ENCODE measurements at regions of chr10 and their contacts with region 1.

Region 1: DNA sequence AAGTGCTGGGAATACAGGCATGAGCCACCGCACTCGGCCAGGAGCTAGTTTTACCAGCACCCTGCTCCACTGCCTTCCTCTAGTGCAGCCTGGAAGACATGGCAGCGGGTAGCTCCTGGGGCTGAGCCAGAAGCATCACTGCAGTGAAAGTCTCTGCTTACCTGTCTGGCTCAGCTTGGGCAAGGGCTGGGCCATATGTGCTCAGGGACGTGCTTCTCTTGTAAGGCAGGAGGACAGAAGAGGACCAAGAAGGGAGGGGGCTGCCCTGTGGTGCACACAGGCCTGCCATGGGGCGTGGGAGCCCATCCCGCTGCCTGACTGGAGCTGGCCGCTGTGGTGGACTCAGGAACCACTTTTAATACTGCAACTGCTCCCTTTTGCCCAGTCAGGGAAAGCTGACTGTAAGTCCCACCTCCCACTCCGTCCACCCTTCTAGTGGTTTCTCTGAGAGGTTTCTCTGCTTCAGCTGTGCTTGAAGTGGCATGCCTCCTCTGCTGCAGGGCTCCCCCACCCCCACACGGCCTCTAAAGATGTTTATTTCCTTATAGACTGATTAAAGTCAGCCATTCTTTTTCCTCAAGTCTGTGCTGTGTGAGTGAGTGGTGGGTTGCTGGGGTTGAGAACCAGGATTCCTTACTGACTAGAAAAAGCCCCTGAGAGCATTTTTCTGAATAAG is 25.3 kb upstream of the C10orf95 start:
- DNase-seq: no peak
- H3K4me3 ChIP-seq: no peak overlapping the region
- H3K27ac ChIP-seq: no peak overlapping the region
- H3K4me1 ChIP-seq: no peaks in the 10 kb centered on the region
- H3K27me3 ChIP-seq: no peaks in the 10 kb centered on the region
- CTCF ChIP-seq: no peak
- POLR2A ChIP-seq: no peak

Region 2: GRCh38 chr10:102229810-102230263 is 246.8 kb before region 1 on chr10:
- intact Hi-C with region 1: no loop called
- DNase-seq: peak; percentile 79
- H3K4me3 ChIP-seq: peak overlapping the region in 1 of 2 donors; percentile 14
- H3K27ac ChIP-seq: no peak overlapping the region
- H3K4me1 ChIP-seq: peaks cover 0 to 18% of the 10 kb centered on the region in 2 donors
- H3K27me3 ChIP-seq: peaks cover 13 to 18% of the 10 kb centered on the region in 2 donors
- CTCF ChIP-seq: peak; percentile 90 to 98 (median 96)
- POLR2A ChIP-seq: no peak

Region 3: GRCh38 chr10:102394079-102394800 is 82.4 kb before region 1 on chr10:
- intact Hi-C with region 1: loop called (anchors 5 kb)
- DNase-seq: peak; percentile 92
- H3K4me3 ChIP-seq: peak overlapping the region; percentile 58 to 85
- H3K27ac ChIP-seq: peak overlapping the region; percentile 97 to 98
- H3K4me1 ChIP-seq: peaks cover 0 to 14% of the 10 kb centered on the region in 2 donors
- H3K27me3 ChIP-seq: no peaks in the 10 kb centered on the region
- CTCF ChIP-seq: peak in 3 of 4 experiments; percentile 95 to 99 (median 98)
- POLR2A ChIP-seq: peak; percentile 39 to 80

Region 4: GRCh38 chr10:102450194-102450938 is 26.2 kb before region 1 on chr10:
- intact Hi-C with region 1: no loop called
- DNase-seq: peak; percentile 59 to 79
- H3K4me3 ChIP-seq: peak overlapping the region; percentile 51 to 82
- H3K27ac ChIP-seq: peak overlapping the region; percentile 76 to 85
- H3K4me1 ChIP-seq: no peaks in the 10 kb centered on the region
- H3K27me3 ChIP-seq: no peaks in the 10 kb centered on the region
- CTCF ChIP-seq: peak in 2 of 4 experiments; percentile 22 to 30
- POLR2A ChIP-seq: peak; percentile 13 to 69

Region 5: DNA sequence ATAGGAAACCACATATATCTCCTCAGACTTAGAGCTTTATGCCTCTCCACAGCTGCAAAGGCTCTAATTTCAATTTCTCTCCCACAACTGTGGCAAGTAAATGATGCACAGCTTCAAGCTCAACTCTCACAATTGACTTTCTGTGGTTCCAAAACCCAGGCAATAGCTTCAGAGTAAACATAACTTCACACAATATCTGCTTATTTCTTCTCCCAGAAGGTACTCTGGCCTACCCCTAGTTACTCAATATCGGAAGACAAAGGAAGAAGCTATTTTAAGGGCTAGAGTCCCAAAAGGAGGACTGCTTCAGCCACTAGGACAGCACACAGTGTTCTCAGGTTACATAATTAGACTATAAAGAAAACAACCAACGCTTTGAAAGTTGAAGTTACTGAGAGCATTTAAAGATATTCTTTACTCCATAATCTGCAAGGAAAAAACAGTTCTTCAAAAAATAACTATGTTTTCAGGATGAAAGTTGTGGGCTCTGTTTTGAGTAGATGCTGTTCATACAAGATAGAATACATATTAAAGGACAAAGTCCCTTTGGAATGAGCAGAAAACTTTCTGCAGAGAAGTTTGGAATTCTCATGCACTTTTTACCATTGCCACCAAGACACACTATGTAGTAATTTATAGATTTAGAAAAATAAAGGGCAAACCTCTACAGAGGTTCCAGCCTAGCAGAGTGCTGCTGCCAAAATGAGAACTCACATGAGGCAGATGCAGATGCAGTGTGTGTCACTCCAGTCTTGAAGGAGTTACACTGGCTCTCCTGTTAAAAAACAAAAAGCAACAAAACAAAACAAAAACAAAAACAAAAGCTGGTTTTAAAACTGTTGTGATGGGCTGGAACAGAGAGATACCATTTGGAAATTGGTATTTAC is 634.7 kb after region 1 on chr10:
- intact Hi-C with region 1: no loop called
- DNase-seq: no peak
- H3K4me3 ChIP-seq: no peak overlapping the region
- H3K27ac ChIP-seq: peak overlapping the region; percentile 66 to 84
- H3K4me1 ChIP-seq: peaks cover 0 to 16% of the 10 kb centered on the region in 2 donors
- H3K27me3 ChIP-seq: no peaks in the 10 kb centered on the region
- CTCF ChIP-seq: peak in 2 of 4 experiments; percentile 25 to 29
- POLR2A ChIP-seq: peak in 1 of 2 donors; percentile 49